OCI-LY7 (cell line): ENCODE measurements at regions of chrX and their contacts with region 1.

Region 1: GRCh38 chrX:22135994-22136684 is 104.0 kb downstream of the PHEX start:
- DNase-seq: peak; percentile 40
- H3K4me3 ChIP-seq: no peak overlapping the region
- H3K27ac ChIP-seq: no peak overlapping the region
- H3K4me1 ChIP-seq: no peaks in the 10 kb centered on the region
- CTCF ChIP-seq: peak; percentile 76

Region 2: DNA sequence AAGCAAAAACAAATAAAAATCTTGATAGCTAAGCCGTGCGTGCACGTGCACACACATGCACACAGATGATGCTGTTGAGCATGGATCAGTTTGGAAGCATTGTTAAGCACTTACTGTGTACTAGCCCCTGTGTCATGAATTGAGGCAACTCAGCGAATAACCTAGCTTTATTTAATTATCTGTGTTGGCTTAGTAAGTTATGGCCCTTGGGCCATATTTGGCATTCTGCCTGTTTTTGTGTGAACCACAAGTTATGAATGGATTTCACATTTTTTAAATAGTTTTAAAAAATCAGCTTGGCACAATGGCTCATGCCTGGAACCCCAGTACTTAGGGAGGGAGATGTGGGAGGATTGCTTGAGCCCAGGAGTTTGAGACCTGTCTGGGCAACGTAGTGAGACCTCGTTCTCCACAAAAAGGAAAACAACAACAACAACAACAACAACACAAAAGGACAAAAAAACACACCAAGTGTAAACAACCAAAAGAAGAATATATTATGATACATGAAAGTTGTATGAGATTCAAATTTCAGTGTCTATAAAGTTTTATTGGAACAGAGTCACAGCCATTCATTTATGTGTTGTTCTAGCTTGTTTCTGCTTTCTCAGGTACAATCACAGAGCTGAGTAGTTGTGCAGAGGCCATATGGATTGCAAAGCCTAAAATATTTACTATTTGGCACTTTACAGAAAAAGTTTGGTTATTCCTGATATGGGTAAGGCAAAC is 23.1 kb after region 1 on chrX:
- CTCF ChIA-PET with region 1: no interaction called
- POLR2A ChIA-PET with region 1: no interaction called
- intact Hi-C with region 1: no loop called
- DNase-seq: no peak
- H3K4me3 ChIP-seq: no peak overlapping the region
- H3K27ac ChIP-seq: no peak overlapping the region
- H3K4me1 ChIP-seq: no peaks in the 10 kb centered on the region
- CTCF ChIP-seq: no peak

Region 3: GRCh38 chrX:22192417-22193060 is 56.4 kb after region 1 on chrX:
- CTCF ChIA-PET with region 1: no interaction called
- POLR2A ChIA-PET with region 1: no interaction called
- intact Hi-C with region 1: loop called (anchors 2 kb)
- DNase-seq: peak; percentile 25
- H3K4me3 ChIP-seq: no peak overlapping the region
- H3K27ac ChIP-seq: no peak overlapping the region
- H3K4me1 ChIP-seq: no peaks in the 10 kb centered on the region
- CTCF ChIP-seq: peak; percentile 74

Region 4: DNA sequence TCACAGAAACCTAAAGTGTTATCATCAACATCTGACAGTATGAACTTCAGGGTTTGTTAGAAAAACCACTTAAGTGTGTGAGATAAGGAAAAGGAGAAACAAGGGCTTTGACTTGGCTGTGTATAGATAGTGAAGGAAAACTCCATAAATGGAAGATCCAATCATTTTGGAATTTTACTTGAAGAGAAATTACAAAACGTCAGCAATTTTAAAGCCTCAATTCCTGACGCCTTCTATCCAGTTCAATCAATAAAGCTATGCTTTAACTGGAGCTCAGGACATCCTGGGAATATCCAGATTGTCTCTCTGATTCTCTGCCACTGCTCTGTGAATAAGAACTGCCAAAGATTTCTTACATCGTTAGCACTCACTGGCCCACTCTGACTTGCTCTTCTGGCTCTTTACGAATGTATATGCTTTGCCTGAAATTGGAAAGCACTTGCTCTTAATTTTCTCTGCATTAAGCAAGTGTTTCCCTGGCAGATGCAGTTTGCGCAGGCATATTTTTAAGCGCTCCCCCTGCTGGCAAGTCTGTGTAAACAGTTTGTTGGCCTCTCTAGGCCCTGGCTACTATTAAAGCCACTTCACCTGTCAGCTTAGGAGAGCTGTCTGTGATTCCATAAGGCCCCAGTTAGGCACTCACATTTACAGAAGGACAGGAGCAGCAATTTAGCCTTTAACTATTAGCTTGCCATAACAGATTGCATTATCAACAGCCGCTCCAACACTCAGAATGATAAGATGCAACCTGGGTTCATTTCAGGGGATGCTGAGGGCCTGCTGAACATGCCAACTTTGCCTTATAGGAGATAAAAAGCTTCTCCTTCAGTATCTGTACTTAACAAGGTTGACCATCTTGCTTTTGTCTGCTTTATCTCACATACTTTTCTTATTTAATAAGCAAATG is 612.2 kb after region 1 on chrX:
- CTCF ChIA-PET with region 1: no interaction called
- POLR2A ChIA-PET with region 1: no interaction called
- intact Hi-C with region 1: loop called (anchors 10 kb)
- DNase-seq: peak; percentile 39
- H3K4me3 ChIP-seq: no peak overlapping the region
- H3K27ac ChIP-seq: no peak overlapping the region
- H3K4me1 ChIP-seq: no peaks in the 10 kb centered on the region
- CTCF ChIP-seq: peak; percentile 76